ENCODE measurements at regions of chrX and their contacts with region 1.

Region 1: DNA sequence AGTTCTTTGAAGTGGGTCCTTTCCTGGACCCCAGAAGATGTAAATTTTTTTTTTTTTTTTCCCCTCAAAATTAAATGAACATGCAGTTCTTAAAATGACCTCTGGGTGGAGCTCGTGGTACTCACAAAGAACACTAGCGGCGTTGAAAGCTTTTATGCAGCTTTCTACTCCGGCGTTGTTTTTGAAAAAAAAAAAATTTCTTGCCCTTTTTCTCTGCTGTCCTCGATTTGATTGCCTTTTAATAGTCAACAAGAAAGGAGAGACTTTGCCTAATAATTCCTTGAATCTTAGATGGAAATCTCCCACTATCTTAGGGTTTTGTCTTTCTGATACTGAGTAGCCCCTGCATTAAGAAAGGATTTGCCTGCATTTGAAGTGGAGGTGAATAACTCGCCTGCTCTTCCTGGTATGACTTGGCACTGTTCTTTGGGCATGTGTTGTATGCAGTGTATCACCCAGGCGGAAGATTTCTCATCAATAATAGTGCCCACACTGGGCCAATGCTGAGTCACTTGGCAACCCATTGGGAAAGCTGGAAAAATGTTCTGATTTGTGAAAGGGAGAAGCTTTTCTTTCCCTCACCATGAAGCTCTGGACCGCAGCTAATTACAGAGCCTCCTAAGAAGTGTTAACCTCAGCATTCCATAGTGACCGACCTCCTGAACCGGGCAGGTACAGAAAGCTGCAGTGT is 104.0 kb downstream of the PHEX start:
- DNase-seq: no peak
- ATAC-seq: peak; percentile 43
- H3K4me3 ChIP-seq: no peak overlapping the region
- H3K27ac ChIP-seq: no peak overlapping the region
- H3K4me1 ChIP-seq: no peaks in the 10 kb centered on the region
- H3K27me3 ChIP-seq: no peaks in the 10 kb centered on the region
- CTCF ChIP-seq: peak; percentile 51 to 68 (median 68)
- EP300 ChIP-seq: no peak
- POLR2A ChIP-seq: no peak
- RAD21 ChIP-seq: peak; percentile 78

Region 2: DNA sequence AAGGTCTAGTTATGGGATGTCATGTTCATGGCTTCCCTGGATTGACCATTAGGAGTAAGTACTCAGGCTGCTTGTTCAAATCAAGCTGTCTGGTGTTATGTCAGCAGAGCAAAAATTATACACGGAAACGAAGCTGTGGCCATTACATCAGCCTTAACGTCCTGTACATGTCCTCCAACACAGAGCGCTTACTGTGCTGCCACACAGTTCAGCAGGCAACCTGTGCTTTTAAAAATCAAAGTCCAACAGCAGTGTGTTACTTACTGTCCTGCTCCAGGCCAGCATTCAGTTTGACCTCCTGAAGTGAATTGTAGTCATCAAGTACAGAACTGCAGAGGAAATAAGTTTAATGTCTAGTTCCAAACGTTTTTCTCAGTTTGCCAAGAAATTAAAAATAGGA is 524.0 kb before region 1 on chrX:
- CTCF ChIA-PET with region 1: no interaction called
- POLR2A ChIA-PET with region 1: no interaction called
- RAD21 ChIA-PET with region 1: no interaction called
- SMC1A ChIA-PET with region 1: no interaction called
- in situ Hi-C with region 1: no loop called
- intact Hi-C with region 1: no loop called
- DNase-seq: no peak
- ATAC-seq: no peak
- H3K4me3 ChIP-seq: no peak overlapping the region
- H3K27ac ChIP-seq: no peak overlapping the region
- H3K4me1 ChIP-seq: no peaks in the 10 kb centered on the region
- H3K27me3 ChIP-seq: no peaks in the 10 kb centered on the region
- CTCF ChIP-seq: no peak
- EP300 ChIP-seq: no peak
- POLR2A ChIP-seq: no peak
- RAD21 ChIP-seq: no peak

Region 3: GRCh38 chrX:22069586-22069985 is 66.6 kb before region 1 on chrX:
- CTCF ChIA-PET with region 1: interaction called, 13 read pairs
- POLR2A ChIA-PET with region 1: no interaction called
- RAD21 ChIA-PET with region 1: interaction called, 8 read pairs
- SMC1A ChIA-PET with region 1: interaction called, 12 read pairs
- in situ Hi-C with region 1: no loop called
- intact Hi-C with region 1: no loop called
- DNase-seq: no peak
- ATAC-seq: peak; percentile 21; the same call in 1 of the 3 replicates
- H3K4me3 ChIP-seq: no peak overlapping the region
- H3K27ac ChIP-seq: no peak overlapping the region
- H3K4me1 ChIP-seq: no peaks in the 10 kb centered on the region
- H3K27me3 ChIP-seq: no peaks in the 10 kb centered on the region
- CTCF ChIP-seq: no peak
- EP300 ChIP-seq: no peak
- POLR2A ChIP-seq: no peak
- RAD21 ChIP-seq: no peak

Region 4: DNA sequence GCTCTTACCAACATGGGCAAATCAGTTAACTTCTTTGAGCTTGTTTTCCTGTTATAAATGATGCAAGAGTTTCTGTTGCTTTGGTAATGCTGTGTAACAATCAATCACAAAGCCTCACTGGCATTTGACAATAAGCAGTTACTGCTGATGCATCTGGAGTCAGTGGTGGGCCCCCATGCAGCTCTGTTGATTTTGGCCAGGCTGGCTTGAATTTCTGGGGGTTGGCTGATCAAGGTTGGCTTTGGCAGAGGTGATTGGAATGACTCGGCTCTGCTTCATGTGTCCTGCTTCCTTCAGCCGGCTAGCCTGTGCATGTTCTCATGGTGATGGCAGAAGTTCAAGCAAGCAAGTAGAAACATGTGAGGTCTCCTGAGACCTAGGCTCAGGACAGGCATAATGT is 13.6 kb before region 1 on chrX:
- CTCF ChIA-PET with region 1: interaction called, 49 read pairs
- POLR2A ChIA-PET with region 1: interaction called, 5 read pairs
- RAD21 ChIA-PET with region 1: interaction called, 11 read pairs
- SMC1A ChIA-PET with region 1: interaction called, 29 read pairs
- in situ Hi-C with region 1: no loop called
- intact Hi-C with region 1: no loop called
- DNase-seq: no peak
- ATAC-seq: peak; percentile 37
- H3K4me3 ChIP-seq: no peak overlapping the region
- H3K27ac ChIP-seq: no peak overlapping the region
- H3K4me1 ChIP-seq: no peaks in the 10 kb centered on the region
- H3K27me3 ChIP-seq: no peaks in the 10 kb centered on the region
- CTCF ChIP-seq: no peak
- EP300 ChIP-seq: no peak
- POLR2A ChIP-seq: no peak
- RAD21 ChIP-seq: no peak

Region 5: GRCh38 chrX:22177950-22178515 is 41.9 kb after region 1 on chrX:
- CTCF ChIA-PET with region 1: interaction called, 12 read pairs
- POLR2A ChIA-PET with region 1: no interaction called
- RAD21 ChIA-PET with region 1: interaction called, 13 read pairs
- SMC1A ChIA-PET with region 1: interaction called, 9 read pairs
- in situ Hi-C with region 1: no loop called
- intact Hi-C with region 1: no loop called
- DNase-seq: no peak
- ATAC-seq: peak; percentile 52
- H3K4me3 ChIP-seq: no peak overlapping the region
- H3K27ac ChIP-seq: no peak overlapping the region
- H3K4me1 ChIP-seq: no peaks in the 10 kb centered on the region
- H3K27me3 ChIP-seq: no peaks in the 10 kb centered on the region
- CTCF ChIP-seq: no peak
- EP300 ChIP-seq: no peak
- POLR2A ChIP-seq: no peak
- RAD21 ChIP-seq: no peak

Region 6: GRCh38 chrX:22278374-22278773 is 142.2 kb after region 1 on chrX:
- CTCF ChIA-PET with region 1: interaction called, 4 read pairs
- POLR2A ChIA-PET with region 1: no interaction called
- RAD21 ChIA-PET with region 1: interaction called, 10 read pairs
- SMC1A ChIA-PET with region 1: interaction called, 4 read pairs
- in situ Hi-C with region 1: no loop called
- intact Hi-C with region 1: no loop called
- DNase-seq: no peak
- ATAC-seq: no peak
- H3K4me3 ChIP-seq: no peak overlapping the region
- H3K27ac ChIP-seq: no peak overlapping the region
- H3K4me1 ChIP-seq: no peaks in the 10 kb centered on the region
- H3K27me3 ChIP-seq: no peaks in the 10 kb centered on the region
- CTCF ChIP-seq: peak in 1 of 3 experiments; percentile 5; a peak in 1 of 6 replicates
- EP300 ChIP-seq: no peak
- POLR2A ChIP-seq: no peak
- RAD21 ChIP-seq: no peak